Posterior vena cava (tissue), 2 donors: ENCODE measurements at regions of chr4 and their contacts with region 1.

Region 1: GRCh38 chr4:60259781-60260180 is 940.3 kb upstream of the ADGRL3 start:
- DNase-seq: no peak

Region 2: GRCh38 chr4:60296386-60296785 is 36.6 kb after region 1 on chr4:
- intact Hi-C with region 1: no loop called
- DNase-seq: no peak

Region 3: DNA sequence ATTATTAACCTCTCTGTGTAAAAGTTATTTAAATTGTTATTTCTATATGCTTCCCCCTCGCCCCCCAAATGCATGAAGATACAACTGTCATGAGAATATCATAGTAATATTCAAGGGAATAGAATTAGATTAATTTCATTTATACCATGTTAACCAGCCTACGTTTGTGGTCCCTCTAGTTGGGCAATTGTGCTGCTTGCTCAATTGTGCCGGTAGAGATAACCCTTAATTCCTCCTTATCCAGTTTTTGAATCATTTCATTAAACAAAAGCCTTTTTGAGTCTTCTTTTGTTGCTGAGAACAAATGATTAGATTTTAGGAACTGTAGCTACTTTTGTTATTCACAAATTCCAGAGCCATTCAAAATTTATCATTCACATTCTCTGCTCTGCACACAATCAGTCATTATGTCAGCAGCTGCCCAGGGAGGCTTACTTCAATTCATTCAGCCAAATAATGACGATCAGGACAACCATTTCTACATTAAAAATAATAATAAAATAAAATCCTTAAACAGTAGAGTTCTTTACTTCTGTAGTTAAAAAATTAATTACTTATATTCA is 1038.5 kb after region 1 on chr4:
- intact Hi-C with region 1: loop called in 1 of 2 experiments (anchors 5 kb)
- DNase-seq: no peak